Ovary (tissue), 10 donors: ENCODE measurements at regions of chr5 and their contacts with region 1.

Region 1: GRCh38 chr5:91998774-91999173 is 615.7 kb upstream of the ARRDC3 start:
- DNase-seq: no peak
- H3K4me3 ChIP-seq: no peak overlapping the region
- H3K27ac ChIP-seq: no peak overlapping the region
- H3K4me1 ChIP-seq: no peaks in the 10 kb centered on the region
- H3K27me3 ChIP-seq: no peaks in the 10 kb centered on the region
- CTCF ChIP-seq: no peak
- EP300 ChIP-seq: no peak
- POLR2A ChIP-seq: no peak

Region 2: GRCh38 chr5:91332267-91333045 is 666.3 kb before region 1 on chr5:
- intact Hi-C with region 1: loop called in 1 of 4 experiments (anchors 10 kb)
- DNase-seq: no peak
- H3K4me3 ChIP-seq: no peak overlapping the region
- H3K27ac ChIP-seq: no peak overlapping the region
- H3K4me1 ChIP-seq: no peaks in the 10 kb centered on the region
- H3K27me3 ChIP-seq: no peaks in the 10 kb centered on the region
- CTCF ChIP-seq: no peak
- EP300 ChIP-seq: no peak
- POLR2A ChIP-seq: no peak